HepG2 (cell line): ENCODE measurements at regions of chr22 and their contacts with region 1.

Region 1: DNA sequence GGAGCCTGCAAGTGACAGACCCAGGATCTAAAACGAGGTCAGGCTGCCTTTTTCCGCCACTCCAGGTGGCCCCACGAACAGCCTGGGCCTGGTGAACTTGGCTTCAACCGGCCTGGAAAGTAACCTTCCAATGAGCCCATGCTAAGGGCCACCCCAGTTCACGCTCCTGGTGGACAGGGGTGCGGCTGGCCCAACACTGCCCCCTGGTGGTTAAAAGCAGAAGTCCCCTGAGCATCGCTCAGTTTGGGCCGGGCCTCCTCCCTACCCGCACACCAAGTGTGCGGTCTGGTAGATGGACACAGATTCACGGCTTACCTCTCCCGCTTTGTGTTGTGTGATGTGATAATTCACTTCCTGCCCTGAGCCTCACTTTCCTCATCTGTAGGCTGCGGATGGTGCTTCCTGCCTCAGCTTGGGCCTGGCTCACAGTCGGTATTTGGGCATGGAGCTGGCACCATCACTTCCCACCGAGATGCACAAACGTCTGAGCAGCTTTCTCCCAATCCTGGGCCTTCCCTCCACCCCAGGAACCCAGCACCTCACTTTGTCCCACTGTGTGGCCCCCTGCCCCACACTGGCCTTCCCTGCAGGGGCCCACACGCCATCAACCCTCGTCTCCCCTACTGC is 13.7 kb upstream of the SEC14L3 start:
- DNase-seq: peak; percentile 34
- ATAC-seq: peak; percentile 97
- H3K4me3 ChIP-seq: no peak overlapping the region
- H3K27ac ChIP-seq: no peak overlapping the region
- H3K4me1 ChIP-seq: no peaks in the 10 kb centered on the region
- H3K27me3 ChIP-seq: peaks cover 0 to under 1% of the 10 kb centered on the region in 2 experiments; a peak in 2 of 5 replicates
- CTCF ChIP-seq: peak; percentile 97
- EP300 ChIP-seq: no peak
- POLR2A ChIP-seq: no peak
- RAD21 ChIP-seq: peak; percentile 90

Region 2: DNA sequence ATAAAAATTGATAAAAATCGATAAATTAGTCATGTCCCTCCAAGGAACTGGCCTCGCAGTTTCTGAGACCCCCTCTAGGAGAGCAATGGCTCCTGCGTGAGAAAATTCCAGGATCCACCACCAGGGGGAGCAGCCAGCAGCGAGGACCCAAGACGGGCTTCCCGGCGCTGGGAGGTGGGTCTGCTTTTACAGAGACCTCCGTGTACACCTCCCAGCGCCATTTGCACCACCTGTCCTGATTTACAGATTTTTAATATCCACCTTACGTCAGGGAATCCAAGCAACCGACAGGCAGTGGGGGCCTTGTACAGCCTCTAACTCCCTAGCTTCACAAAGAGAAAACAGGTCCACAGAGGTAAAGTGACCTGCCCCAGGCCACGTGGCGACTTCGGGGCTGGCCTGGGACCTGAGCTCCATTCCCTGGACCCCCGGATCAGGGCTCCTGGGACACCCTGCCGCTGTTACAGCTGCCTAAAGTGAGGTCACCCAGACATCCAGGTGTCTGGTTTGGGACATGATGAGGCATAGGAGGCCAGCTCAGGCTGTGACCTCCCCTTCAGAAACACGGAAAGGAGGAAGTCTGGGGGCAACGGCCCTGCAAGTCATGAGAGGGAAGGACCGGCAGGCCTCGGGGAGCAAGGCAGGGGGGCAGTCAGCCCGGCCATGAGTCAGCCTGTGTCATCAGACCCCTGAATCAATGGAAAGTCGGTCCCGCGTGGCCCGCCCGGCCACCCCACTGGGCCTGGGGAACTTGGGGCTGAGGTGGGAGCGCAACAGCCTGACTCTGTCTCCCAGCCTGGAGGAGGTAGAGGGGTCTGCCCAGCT is 222.3 kb before region 1 on chr22:
- CTCF ChIA-PET with region 1: no interaction called
- POLR2A ChIA-PET with region 1: no interaction called
- in situ Hi-C with region 1: loop called (anchors 10 kb)
- intact Hi-C with region 1: no loop called
- DNase-seq: peak; percentile 64
- ATAC-seq: peak; percentile 62
- H3K4me3 ChIP-seq: peak overlapping the region; percentile 31 to 63 (median 36)
- H3K27ac ChIP-seq: no peak overlapping the region
- H3K4me1 ChIP-seq: peaks cover 32% of the 10 kb centered on the region
- H3K27me3 ChIP-seq: peaks cover 12 to 43% of the 10 kb centered on the region in 2 experiments
- CTCF ChIP-seq: peak; percentile 78
- EP300 ChIP-seq: no peak
- POLR2A ChIP-seq: no peak
- RAD21 ChIP-seq: peak; percentile 52

Region 3: DNA sequence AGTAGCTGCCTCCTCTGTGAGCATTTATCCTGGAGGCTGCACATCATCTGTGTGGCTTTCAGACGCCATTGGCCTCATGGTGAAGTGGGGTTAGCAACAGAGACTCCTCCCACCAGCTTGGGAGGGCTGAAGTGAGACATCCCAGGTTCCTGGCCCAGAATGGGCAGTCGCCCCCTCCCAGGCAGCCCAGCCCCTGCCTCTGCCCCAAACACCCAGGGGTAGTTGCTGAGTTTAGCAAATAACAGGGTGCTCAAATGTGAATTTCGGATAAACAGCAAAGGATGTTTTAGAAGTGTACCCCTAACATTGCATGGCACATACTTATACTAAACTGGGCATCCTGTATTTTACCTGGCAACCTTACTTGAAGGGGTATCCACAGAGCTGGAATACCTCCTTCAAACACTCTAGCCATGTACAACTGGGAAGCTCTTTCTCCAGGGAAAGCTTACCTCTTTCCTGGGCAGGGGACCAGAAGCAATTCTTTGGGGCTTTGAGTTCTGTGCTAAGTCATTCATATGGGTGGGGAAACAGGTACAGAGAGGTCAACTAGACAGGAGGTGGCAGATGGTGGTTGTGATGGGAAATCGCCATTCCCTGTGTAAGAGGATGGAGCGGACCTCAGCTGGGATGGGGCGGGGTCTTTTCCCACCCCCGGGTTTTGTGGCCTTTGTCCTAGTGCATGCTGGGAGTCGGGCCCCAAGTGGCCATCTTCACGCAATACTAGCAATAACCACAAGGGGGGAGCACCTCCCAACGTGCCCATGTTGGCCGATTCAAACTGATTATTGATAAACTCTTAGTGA is 40.6 kb before region 1 on chr22:
- CTCF ChIA-PET with region 1: interaction called, 20 read pairs
- POLR2A ChIA-PET with region 1: no interaction called
- in situ Hi-C with region 1: no loop called
- intact Hi-C with region 1: loop called (anchors 1 kb)
- DNase-seq: peak; percentile 41
- ATAC-seq: peak; percentile 79
- H3K4me3 ChIP-seq: no peak overlapping the region
- H3K27ac ChIP-seq: no peak overlapping the region
- H3K4me1 ChIP-seq: peaks cover 16% of the 10 kb centered on the region
- H3K27me3 ChIP-seq: peaks cover 0 to 7% of the 10 kb centered on the region in 2 experiments; a peak in 2 of 5 replicates
- CTCF ChIP-seq: peak; percentile 78
- EP300 ChIP-seq: no peak
- POLR2A ChIP-seq: no peak; a peak in 1 of 4 replicates
- RAD21 ChIP-seq: peak; percentile 66

Region 4: DNA sequence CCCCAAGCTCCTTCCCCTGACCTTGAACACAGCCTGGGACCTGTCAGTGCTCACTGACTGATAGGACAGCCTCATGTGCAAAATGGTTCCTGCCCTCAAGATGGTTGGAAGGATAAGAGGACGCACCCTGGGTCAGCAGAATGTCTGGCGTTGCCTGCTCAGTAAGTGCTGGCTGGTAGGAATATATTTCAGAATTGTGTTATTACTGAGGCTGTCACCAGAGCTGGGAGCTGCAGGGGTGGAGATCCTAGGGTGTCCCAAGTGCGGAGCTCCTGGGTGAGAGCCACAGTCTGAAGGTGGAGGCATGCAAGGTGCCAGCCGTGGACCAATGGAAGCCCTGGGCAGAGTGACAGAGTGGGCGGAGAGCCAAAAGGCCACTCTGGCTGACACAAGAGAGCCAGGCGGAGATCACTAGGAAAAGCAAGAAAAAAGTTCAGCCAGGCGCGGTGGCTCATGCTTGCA is 21.1 kb after region 1 on chr22:
- CTCF ChIA-PET with region 1: no interaction called
- POLR2A ChIA-PET with region 1: no interaction called
- in situ Hi-C with region 1: no loop called
- intact Hi-C with region 1: no loop called
- DNase-seq: no peak
- ATAC-seq: no peak
- H3K4me3 ChIP-seq: no peak overlapping the region
- H3K27ac ChIP-seq: no peak overlapping the region
- H3K4me1 ChIP-seq: peaks cover 66% of the 10 kb centered on the region
- H3K27me3 ChIP-seq: no peaks in the 10 kb centered on the region
- CTCF ChIP-seq: no peak
- EP300 ChIP-seq: no peak
- POLR2A ChIP-seq: no peak
- RAD21 ChIP-seq: no peak